ENCODE measurements at regions of chr20 and their contacts with region 1.

Region 1: GRCh38 chr20:50464026-50464724 is 46.0 kb upstream of the PTPN1 start:
- DNase-seq: peak; percentile 63
- H3K4me3 Mint-ChIP-seq: no peak overlapping the region
- H3K27ac Mint-ChIP-seq: no peak overlapping the region
- H3K4me1 Mint-ChIP-seq: peaks cover 14% of the 10 kb centered on the region
- H3K27me3 Mint-ChIP-seq: peaks cover 8% of the 10 kb centered on the region

Region 2: GRCh38 chr20:50569864-50570836 is 106.0 kb after region 1 on chr20:
- CTCF ChIA-PET with region 1: interaction called, 13 read pairs
- POLR2A ChIA-PET with region 1: no interaction called
- DNase-seq: peak; percentile 53
- H3K4me3 Mint-ChIP-seq: no peak overlapping the region
- H3K27ac Mint-ChIP-seq: peak overlapping the region; percentile 73
- H3K4me1 Mint-ChIP-seq: peaks cover 59% of the 10 kb centered on the region
- H3K27me3 Mint-ChIP-seq: no peaks in the 10 kb centered on the region